CD8-positive, alpha-beta T cell (primary cell): ENCODE measurements at regions of chr7 and their contacts with region 1.

Region 1: DNA sequence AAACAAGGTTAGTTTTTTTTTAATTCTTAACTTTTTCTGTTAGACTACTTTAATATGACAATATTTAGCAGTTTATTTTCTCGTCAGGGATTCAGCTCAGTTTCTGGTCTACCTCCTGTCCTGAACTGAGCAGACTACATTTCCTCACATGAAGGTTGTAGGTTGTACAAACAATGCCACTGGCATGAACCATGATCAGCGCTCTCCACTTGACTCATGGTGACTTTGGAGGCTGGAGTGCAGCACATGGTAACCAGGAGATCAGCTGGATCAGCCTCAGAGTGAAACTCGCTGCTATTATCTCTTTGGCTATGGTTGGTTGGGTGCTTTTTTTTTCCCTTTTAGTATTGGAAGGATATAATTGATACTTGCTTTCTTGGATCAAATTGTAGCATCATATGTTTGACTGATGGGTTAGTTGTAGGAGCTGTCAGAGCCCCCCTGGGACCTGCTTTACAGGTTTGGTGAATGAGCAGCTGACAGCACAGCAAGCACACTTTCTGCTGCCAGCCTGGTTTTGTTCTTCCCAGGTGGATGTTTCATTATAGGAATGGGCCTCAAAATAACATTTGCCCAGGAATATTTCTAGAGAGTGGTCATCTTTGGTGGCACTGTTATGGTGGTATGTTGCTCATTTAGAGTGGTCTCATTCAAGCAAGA is 556.4 kb downstream of the AUTS2 start:
- DNase-seq: no peak
- ATAC-seq: no peak
- H3K4me3 ChIP-seq: no peak overlapping the region
- H3K4me3 Mint-ChIP-seq: no peak overlapping the region
- H3K27ac ChIP-seq: no peak overlapping the region
- H3K27ac Mint-ChIP-seq: no peak overlapping the region
- H3K4me1 ChIP-seq: no peaks in the 10 kb centered on the region
- H3K4me1 Mint-ChIP-seq: no peaks in the 10 kb centered on the region
- H3K27me3 ChIP-seq: no peaks in the 10 kb centered on the region
- H3K27me3 Mint-ChIP-seq: no peaks in the 10 kb centered on the region
- CTCF ChIP-seq: no peak

Region 2: DNA sequence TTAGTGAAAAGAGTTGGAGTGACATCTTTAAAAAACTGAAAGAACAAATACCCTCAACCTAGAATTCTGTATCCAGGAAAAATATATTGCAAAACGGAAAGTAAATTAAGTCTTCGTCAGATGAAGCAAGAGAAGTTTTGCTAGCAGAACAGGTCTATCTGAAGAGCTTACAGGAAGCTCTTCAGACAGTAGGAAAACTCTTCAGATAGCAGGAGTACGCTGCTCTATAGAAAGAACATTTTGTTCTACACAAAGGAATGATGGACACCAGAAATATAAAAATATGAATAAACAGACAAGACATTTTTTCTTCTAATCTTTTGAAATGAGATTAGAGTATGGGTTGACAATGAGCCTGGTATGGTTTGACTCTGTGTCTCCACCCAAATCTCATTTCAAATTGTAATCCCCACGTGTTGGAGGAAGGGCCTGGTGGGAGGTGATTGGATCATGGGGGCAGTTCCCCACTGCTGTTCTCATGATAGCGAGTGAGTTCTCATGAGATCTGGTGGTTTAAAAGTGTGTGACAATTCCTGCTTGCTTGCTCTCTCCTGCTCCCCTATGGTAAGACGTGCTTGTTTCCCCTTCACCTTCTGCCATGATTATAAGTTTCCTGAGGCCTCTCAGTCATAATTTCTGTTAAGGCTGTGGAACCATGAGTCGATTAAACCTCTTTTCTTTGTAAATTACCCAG is 11.0 kb after region 1 on chr7:
- CTCF ChIA-PET with region 1: no interaction called
- POLR2A ChIA-PET with region 1: no interaction called
- intact Hi-C with region 1: loop called in 1 of 2 experiments (anchors 1 kb)
- DNase-seq: no peak
- ATAC-seq: no peak
- H3K4me3 ChIP-seq: no peak overlapping the region
- H3K4me3 Mint-ChIP-seq: no peak overlapping the region
- H3K27ac ChIP-seq: no peak overlapping the region
- H3K27ac Mint-ChIP-seq: no peak overlapping the region
- H3K4me1 ChIP-seq: no peaks in the 10 kb centered on the region
- H3K4me1 Mint-ChIP-seq: no peaks in the 10 kb centered on the region
- H3K27me3 ChIP-seq: no peaks in the 10 kb centered on the region
- H3K27me3 Mint-ChIP-seq: no peaks in the 10 kb centered on the region
- CTCF ChIP-seq: no peak